HepG2 (cell line): ENCODE measurements at regions of chr11 and their contacts with region 1.

Region 1: DNA sequence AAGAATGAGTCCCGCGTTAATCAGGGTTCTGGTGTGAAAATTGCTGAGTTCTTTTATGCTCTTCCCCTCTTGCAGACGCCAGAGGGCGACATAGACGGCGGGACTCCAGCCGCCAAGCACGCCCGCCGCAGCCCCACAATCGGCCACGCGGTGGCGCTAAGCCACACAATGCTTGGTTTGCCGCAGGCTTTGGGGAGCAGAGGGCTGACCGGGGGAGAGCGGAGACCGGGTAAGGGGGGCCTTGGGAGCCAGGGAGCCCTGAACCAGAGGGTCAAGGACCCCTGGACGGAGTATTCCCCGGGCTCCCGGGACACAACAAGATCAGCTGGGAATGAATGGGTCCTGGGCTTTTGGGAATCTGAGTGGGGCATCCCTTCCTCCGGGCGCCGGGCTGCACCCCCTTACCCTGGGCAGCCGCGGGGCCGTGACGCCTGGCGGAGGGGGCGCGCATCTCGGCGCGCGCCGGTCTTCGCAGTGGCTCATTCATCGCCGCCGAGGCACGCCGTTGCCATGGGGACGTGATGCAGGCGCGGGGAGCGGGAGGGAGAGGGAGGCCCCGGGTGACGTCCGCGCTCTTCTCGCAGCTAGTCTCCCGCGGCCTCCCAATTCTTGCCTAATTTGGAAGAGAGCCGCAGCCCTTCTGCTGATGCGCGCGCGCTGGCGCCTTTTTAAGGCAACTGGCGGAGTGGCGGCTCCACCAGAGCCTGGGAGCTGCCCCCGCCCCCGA is 12.2 kb upstream of the NPAS4 start:
- DNase-seq: peak; percentile 68
- ATAC-seq: peak; percentile 76
- H3K4me3 ChIP-seq: peak overlapping the region in 1 of 3 experiments; percentile 37; a peak in 1 of 6 replicates
- H3K27ac ChIP-seq: no peak overlapping the region
- H3K4me1 ChIP-seq: 0 out of 2 replicates have a peak, but pooled peaks cover 5% of the 10 kb centered on the region
- H3K27me3 ChIP-seq: peaks cover 5 to 83% of the 10 kb centered on the region in 2 experiments
- CTCF ChIP-seq: peak; percentile 99
- EP300 ChIP-seq: no peak
- POLR2A ChIP-seq: no peak
- RAD21 ChIP-seq: peak; percentile 98

Region 2: DNA sequence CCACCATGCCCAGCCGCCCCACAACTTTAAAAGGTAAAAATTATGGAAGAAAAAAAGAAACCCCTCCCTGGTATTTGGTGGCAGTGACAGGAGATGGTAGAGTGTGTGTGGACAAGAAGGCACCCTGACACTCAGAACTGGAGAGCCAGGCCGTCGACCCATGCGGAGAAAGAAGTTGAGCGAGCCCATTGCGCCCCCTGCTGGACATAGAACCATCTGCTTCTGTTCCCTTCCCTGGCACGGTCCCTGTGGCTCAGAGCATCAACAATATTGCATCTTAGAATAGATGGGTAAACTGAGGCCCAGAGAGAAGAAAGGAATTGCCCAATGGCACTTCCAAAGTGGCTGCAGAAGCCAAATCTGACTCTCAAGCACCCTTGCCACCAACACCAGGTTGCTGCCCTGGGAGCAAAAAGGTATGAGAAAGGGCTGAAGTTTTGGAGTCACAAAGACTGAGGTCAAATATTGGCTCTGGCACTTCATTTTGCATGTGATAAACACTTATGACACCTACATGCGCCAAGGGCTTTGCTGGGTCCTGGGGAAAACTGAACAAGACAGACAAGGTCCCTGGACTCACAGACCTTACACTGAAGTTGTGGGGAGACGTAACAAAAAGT is 21.4 kb after region 1 on chr11:
- CTCF ChIA-PET with region 1: interaction called, 54 read pairs
- POLR2A ChIA-PET with region 1: no interaction called
- in situ Hi-C with region 1: no loop called
- intact Hi-C with region 1: loop called (anchors 1 kb)
- DNase-seq: peak; percentile 46
- ATAC-seq: peak; percentile 89
- H3K4me3 ChIP-seq: no peak overlapping the region
- H3K27ac ChIP-seq: no peak overlapping the region
- H3K4me1 ChIP-seq: no peaks in the 10 kb centered on the region
- H3K27me3 ChIP-seq: no peaks in the 10 kb centered on the region
- CTCF ChIP-seq: peak; percentile 87
- EP300 ChIP-seq: no peak
- POLR2A ChIP-seq: no peak
- RAD21 ChIP-seq: peak; percentile 61; the same call in 1 of the 2 replicates

Region 3: GRCh38 chr11:66438504-66439466 is 30.1 kb after region 1 on chr11 and contains the start of gene MRPL11:
- CTCF ChIA-PET with region 1: interaction called, 11 read pairs
- POLR2A ChIA-PET with region 1: no interaction called
- in situ Hi-C with region 1: no loop called
- intact Hi-C with region 1: no loop called
- DNase-seq: peak; percentile 92
- ATAC-seq: peak; percentile 94
- H3K4me3 ChIP-seq: peak within 1 kb of the TSS; percentile 78 to 89 (median 84)
- H3K27ac ChIP-seq: peak within 1 kb of the TSS; percentile 88
- H3K4me1 ChIP-seq: peaks cover 33% of the 10 kb centered on the region
- H3K27me3 ChIP-seq: peaks cover 2 to 9% of the 10 kb centered on the region in 2 experiments; a peak in 2 of 5 replicates
- CTCF ChIP-seq: peak; percentile 90
- EP300 ChIP-seq: no peak
- POLR2A ChIP-seq: peak; percentile 67 to 78; a peak in 3 of 4 replicates
- RAD21 ChIP-seq: no peak
- total RNA-seq, gene MRPL11: 176 and 220 TPM in 2 replicates

Region 4: DNA sequence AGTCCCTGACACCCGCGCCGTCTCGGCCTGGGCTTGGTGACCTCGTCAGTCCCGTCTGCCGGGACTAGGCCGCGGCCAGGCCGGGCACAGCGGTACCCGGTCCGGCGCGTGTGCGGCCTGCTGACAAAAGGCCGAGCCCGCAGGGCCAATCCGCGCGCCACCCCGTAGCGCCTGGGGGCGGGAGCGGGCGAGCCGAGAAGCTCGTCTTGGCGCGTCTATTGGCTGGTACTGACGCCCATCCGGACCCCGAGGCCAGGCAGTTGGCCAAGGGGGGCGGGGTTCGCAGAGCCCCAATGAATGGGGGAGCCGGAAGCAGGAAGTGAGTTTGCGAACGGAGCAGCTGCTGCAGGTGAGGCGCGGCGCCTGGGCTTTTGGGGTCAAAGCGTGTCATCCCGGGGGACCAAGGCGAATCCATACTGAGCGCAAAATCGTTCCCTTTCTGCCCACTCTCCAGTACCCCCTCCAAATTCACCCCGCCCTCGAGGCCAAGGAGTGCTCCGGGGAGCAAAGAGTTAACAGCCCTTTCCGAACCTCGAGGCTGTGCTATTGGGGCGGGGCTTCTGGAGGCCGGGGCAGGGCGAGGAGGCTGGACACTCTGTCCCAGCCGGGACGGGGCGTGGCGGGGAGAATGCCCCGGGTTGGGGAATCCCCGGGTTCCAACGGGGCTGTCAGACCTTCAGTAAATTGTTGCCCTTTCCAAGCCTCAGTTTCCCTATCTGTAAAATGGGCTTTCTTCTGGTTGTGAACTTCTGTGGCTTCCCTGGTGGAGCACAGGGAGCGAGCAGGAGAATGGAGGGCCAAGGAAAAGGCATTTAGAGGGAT is 71.7 kb after region 1 on chr11 and contains the start of gene DPP3:
- CTCF ChIA-PET with region 1: interaction called, 28 read pairs
- POLR2A ChIA-PET with region 1: no interaction called
- in situ Hi-C with region 1: no loop called
- intact Hi-C with region 1: no loop called
- DNase-seq: peak; percentile 93
- ATAC-seq: peak; percentile 93
- H3K4me3 ChIP-seq: peak within 1 kb of the TSS; percentile 70 to 93 (median 92)
- H3K27ac ChIP-seq: peak within 1 kb of the TSS; percentile 87
- H3K4me1 ChIP-seq: peaks cover 50% of the 10 kb centered on the region
- H3K27me3 ChIP-seq: no peaks in the 10 kb centered on the region
- CTCF ChIP-seq: peak; percentile 18; the same call in 1 of the 2 replicates
- EP300 ChIP-seq: no peak
- POLR2A ChIP-seq: peak; percentile 85 to 93
- RAD21 ChIP-seq: no peak; the same call in 1 of the 2 replicates
- total RNA-seq, gene DPP3: 48.7 and 59.8 TPM in 2 replicates

Region 5: DNA sequence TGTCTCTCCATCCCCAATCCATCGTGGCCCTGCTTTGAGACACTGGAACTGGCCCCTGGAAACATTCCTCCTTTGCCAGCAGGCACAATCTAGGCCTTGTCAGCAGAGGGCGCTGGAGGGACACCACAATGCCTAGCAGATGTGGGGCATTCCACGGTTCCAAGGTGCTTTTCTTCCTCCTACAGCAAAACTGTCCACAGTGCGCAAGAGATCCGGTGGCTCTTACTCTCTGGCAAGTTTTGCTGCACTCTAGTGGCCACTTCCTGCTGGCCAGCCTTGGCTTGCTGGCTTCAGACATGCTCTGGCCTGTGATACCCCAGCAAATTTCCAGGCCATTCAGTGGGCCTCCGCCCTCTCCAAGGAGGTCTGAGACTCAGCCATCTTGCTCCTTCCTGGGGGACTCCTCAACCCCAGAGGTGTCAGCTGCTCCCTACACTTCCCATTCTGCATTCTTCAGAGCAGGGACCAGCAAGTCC is 286.1 kb after region 1 on chr11:
- CTCF ChIA-PET with region 1: interaction called, 6 read pairs
- POLR2A ChIA-PET with region 1: no interaction called
- in situ Hi-C with region 1: loop called (anchors 10 kb)
- intact Hi-C with region 1: no loop called
- DNase-seq: peak; percentile 96
- ATAC-seq: peak; percentile 97
- H3K4me3 ChIP-seq: no peak overlapping the region
- H3K27ac ChIP-seq: no peak overlapping the region
- H3K4me1 ChIP-seq: no peaks in the 10 kb centered on the region
- H3K27me3 ChIP-seq: no peaks in the 10 kb centered on the region
- CTCF ChIP-seq: peak; percentile 97
- EP300 ChIP-seq: no peak
- POLR2A ChIP-seq: no peak
- RAD21 ChIP-seq: peak; percentile 97

Region 6: GRCh38 chr11:66835768-66836405 is 427.2 kb after region 1 on chr11:
- CTCF ChIA-PET with region 1: interaction called, 7 read pairs
- POLR2A ChIA-PET with region 1: no interaction called
- in situ Hi-C with region 1: loop called (anchors 25 kb)
- intact Hi-C with region 1: loop called (anchors 5 kb)
- DNase-seq: no peak
- ATAC-seq: no peak
- H3K4me3 ChIP-seq: no peak overlapping the region
- H3K27ac ChIP-seq: no peak overlapping the region
- H3K4me1 ChIP-seq: peaks cover 8% of the 10 kb centered on the region; the same call in 1 of the 2 replicates
- H3K27me3 ChIP-seq: no peaks in the 10 kb centered on the region; a peak in 1 of 5 replicates
- CTCF ChIP-seq: no peak
- EP300 ChIP-seq: no peak
- POLR2A ChIP-seq: no peak
- RAD21 ChIP-seq: no peak

Region 7: DNA sequence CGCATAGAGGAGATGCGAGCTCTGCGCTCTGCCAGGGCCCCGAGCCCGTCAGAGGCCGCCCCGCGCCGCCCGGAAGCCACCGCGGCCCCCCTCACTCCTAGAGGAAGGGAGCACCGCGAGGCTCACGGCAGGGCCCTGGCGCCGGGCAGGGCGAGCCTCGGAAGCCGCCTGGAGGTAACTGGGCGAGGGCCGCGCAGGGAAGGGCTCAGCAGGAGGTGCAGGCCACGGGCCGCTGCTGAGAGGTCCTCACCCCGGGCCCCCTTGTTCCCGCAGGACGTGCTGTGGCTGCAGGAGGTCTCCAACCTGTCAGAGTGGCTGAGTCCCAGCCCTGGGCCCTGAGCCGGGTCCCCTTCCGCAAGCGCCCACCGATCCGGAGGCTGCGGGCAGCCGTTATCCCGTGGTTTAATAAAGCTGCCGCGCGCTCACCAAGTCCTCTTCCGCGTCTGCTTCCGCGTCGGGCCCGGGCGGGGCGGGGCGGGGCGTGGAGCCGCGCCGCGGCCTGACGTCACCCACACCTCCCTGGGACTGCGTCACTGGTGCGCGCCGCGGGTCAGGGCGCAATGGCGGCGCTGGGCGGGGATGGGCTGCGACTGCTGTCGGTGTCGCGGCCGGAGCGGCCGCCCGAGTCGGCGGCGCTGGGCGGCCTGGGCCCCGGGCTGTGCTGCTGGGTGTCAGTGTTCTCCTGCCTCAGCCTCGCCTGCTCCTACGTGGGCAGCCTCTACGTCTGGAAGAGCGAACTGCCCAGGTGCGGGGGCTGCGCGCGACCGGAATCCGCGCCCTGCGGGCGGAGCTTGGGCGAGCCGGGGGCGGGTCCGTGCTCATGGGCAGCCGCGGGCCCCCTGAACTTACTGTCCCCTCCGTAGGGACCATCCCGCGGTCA is 434.5 kb after region 1 on chr11 and contains the start of gene RCE1:
- CTCF ChIA-PET with region 1: no interaction called
- POLR2A ChIA-PET with region 1: no interaction called
- in situ Hi-C with region 1: loop called (anchors 25 kb)
- intact Hi-C with region 1: no loop called
- DNase-seq: peak; percentile 71
- ATAC-seq: peak; percentile 78
- H3K4me3 ChIP-seq: peak within 1 kb of the TSS; percentile 87 to 99 (median 87)
- H3K27ac ChIP-seq: peak within 1 kb of the TSS; percentile 82
- H3K4me1 ChIP-seq: peaks cover 28% of the 10 kb centered on the region
- H3K27me3 ChIP-seq: no peaks in the 10 kb centered on the region; a peak in 1 of 5 replicates
- CTCF ChIP-seq: no peak
- EP300 ChIP-seq: peak; percentile 21 to 47; a peak in 1 of 4 replicates
- POLR2A ChIP-seq: peak; percentile 87 to 92
- RAD21 ChIP-seq: peak; percentile 40; the same call in 1 of the 2 replicates
- total RNA-seq, gene RCE1: 8.0 and 22.2 TPM in 2 replicates